Heart right ventricle (tissue), 16 donors: ENCODE measurements at regions of chr2 and their contacts with region 1.

Region 1: GRCh38 chr2:17309741-17310339 is 208.4 kb downstream of the RAD51AP2 start:
- DNase-seq: peak in 1 of 2 donors; percentile 23
- ATAC-seq: peak in 2 of 8 donors; percentile 69 to 71
- H3K4me3 ChIP-seq: no peak overlapping the region
- H3K27ac ChIP-seq: no peak overlapping the region
- H3K4me1 ChIP-seq: peaks cover 0 to 3% (median 0%) of the 10 kb centered on the region in 9 donors
- H3K27me3 ChIP-seq: no peaks in the 10 kb centered on the region
- CTCF ChIP-seq: peak; percentile 28 to 75 (median 67)

Region 2: GRCh38 chr2:16559278-16560067 is 750.4 kb before region 1 on chr2:
- intact Hi-C with region 1: loop called in 1 of 10 experiments (anchors 5 kb)
- DNase-seq: no peak
- ATAC-seq: peak in 2 of 8 donors; percentile 25 to 37
- H3K4me3 ChIP-seq: no peak overlapping the region
- H3K27ac ChIP-seq: no peak overlapping the region
- H3K4me1 ChIP-seq: no peaks in the 10 kb centered on the region
- H3K27me3 ChIP-seq: no peaks in the 10 kb centered on the region
- CTCF ChIP-seq: no peak

Region 3: DNA sequence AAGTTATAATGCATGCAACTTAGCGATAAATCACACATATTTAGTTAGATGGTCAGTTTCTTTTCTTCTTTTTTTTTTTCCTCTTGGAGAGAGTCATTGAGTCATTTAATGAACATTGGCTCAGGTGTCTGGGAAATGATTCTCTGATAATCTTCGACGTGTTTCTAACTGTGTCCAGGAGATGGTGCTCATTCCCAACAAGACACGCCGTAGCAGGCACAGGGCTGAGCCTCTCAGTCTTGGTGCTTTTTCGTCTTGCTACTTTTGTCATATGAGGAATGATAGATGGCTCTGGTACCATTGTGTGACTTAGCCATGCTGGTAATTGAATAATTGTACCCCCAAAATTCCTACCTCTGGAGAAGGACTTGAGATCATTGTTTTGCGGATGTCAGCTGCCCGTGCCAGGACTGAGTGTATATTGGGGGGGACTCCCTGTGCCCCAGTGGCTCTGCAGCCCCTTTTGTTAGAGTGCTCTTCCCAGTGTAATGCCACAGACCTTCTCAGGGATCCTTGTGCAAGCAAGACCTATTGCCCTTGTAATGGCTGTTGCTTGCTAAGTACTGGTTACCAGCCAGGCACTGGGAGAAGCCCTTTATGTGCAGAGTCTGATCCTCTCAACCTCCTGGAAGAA is 536.6 kb before region 1 on chr2:
- intact Hi-C with region 1: loop called in 9 of 10 experiments (anchors 2 to 5 kb)
- DNase-seq: peak in 1 of 2 donors; percentile 23
- ATAC-seq: peak in 4 of 8 donors; percentile 46 to 80 (median 56)
- H3K4me3 ChIP-seq: no peak overlapping the region
- H3K27ac ChIP-seq: no peak overlapping the region
- H3K4me1 ChIP-seq: no peaks in the 10 kb centered on the region
- H3K27me3 ChIP-seq: peaks cover 0 to 22% (median 0%) of the 10 kb centered on the region in 7 donors
- CTCF ChIP-seq: peak; percentile 28 to 67 (median 58)